Activated T-helper 2 cell treated with anti-CD3 and anti-CD28 coated beads, Interferon-gamma antibody, Interleukin-2, Interleukin-4, amounts not matched to agents 10 μg/mL and 5 μg/mL and 100 μg/mL, durations not matched to agents 14 hours and 24 hours and 36 hours (primary cell): ENCODE measurements at regions of chr7 and their contacts with region 1.

Region 1: DNA sequence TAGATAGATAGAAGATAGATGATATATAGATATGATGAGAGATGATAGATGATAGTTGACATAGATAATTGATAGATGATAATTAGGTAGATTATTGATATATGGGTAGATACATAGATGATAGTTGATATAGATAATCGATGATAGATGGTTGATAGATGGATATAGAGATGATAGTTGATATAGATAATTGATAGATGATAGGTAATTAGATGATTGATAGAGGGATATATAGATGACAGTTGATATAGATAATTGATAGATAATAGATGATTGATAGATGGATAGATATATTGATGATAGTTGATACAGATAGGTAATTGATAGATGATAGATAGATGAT is 72.3 kb downstream of the PRR15 start:
- DNase-seq: no peak
- H3K4me3 Mint-ChIP-seq: no peak overlapping the region
- H3K27ac Mint-ChIP-seq: no peak overlapping the region
- H3K4me1 Mint-ChIP-seq: no peaks in the 10 kb centered on the region
- H3K27me3 Mint-ChIP-seq: no peaks in the 10 kb centered on the region

Region 2: DNA sequence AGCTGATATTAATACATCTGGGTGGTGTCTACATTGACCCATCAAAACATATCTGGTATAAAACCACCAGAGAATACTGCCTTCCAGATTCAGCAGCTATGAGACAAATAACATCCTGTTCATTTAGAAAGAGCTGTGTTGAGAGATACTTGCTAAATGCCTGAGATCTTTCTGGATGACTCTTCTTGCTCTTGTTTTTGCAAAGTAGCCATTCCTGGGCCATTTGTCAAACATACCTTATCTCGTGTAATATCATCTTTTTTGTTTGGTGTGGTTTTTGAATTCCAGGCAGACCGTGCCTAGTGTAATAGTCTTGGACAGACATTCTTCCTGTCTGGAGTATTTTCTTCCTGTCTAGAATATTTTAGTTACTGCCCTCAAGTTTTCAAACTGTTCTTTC is 147.0 kb before region 1 on chr7:
- intact Hi-C with region 1: no loop called
- DNase-seq: no peak
- H3K4me3 Mint-ChIP-seq: no peak overlapping the region
- H3K27ac Mint-ChIP-seq: no peak overlapping the region
- H3K4me1 Mint-ChIP-seq: no peaks in the 10 kb centered on the region
- H3K27me3 Mint-ChIP-seq: no peaks in the 10 kb centered on the region

Region 3: DNA sequence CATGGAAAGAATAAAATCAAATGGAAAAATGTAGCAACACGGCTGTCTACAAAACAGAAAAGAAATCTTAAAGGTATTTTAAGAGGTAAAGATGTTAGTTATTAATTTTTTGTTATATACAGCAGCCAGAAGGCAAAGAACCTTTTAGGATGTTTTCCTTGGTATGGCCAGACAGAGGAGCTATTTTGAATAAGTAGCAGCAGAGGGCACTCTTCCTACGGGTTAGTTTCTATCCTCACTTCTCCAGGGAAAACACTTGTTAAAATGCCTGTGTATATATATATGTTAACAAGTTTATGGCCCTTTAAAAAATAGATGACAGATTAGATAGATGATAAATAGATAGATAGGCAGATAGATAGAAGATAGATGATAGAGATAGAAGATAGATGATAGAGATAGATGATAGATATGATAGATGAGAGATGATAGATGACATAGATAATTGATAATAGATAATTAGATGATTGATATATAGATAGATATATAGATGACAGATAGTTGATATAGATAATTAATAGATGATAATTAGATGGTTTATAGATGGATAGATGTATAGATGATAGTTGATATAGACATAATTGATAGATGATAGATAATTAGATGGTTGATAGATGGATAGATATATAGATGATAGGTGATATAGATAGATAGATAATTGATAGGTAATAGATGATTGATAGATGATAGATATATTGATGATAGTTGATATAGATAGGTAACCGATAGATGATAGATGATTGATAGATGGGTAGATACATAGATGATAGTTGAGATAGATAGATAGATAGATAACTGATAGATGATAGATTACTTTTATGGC is 112.5 kb after region 1 on chr7:
- intact Hi-C with region 1: loop called (anchors 5 kb)
- DNase-seq: no peak
- H3K4me3 Mint-ChIP-seq: no peak overlapping the region
- H3K27ac Mint-ChIP-seq: no peak overlapping the region
- H3K4me1 Mint-ChIP-seq: no peaks in the 10 kb centered on the region
- H3K27me3 Mint-ChIP-seq: no peaks in the 10 kb centered on the region